ENCODE measurements at regions of chr7 and their contacts with region 1.

Region 1: DNA sequence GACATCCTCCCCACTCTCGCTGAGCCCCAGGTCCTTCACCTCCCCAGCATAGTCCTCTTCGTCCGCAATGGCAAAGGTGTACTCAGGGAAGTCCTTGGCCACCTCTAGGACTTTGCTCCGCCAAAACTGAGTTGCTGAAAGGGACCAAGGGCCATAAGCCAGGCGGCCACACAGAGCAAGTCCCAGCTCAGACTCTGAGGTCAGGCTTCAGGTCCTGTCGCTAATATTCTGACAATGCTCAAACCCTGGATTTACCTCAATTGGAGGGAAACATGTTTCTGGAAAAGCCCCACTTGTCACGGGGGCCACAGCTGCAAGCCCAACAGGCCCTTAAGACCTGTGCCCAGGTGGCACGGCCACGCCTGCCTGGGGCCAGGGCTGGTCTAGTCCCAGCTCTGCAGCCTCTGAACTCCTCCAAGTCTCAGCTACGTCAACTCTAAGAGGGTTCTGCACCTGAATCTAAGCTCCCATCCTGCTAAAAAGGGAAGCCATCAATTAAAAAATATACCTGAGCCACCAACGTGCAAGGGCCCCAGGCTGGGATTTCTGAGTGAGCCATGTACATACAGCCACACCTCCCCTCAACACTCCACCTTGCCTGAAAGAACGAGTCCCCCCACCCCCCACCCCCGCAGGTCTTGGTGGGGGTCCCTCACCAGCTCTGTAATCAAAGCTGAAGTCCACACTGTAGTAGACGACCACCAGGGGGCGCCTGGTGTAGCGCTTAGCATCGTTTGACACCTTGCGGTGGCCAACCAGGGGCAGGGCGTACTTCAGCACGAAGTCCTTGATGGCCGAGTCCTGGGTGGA is 22.9 kb downstream of the PDIA4 start:
- DNase-seq: peak; percentile 89
- ATAC-seq: peak; percentile 88
- H3K4me3 Mint-ChIP-seq: no peak overlapping the region
- H3K27ac Mint-ChIP-seq: no peak overlapping the region; the same call in 1 of the 2 replicates
- H3K4me1 Mint-ChIP-seq: no peaks in the 10 kb centered on the region
- H3K27me3 Mint-ChIP-seq: no peaks in the 10 kb centered on the region
- CTCF ChIP-seq: peak; percentile 93

Region 2: GRCh38 chr7:148987010-148987750 is 18.3 kb before region 1 on chr7:
- CTCF ChIA-PET with region 1: interaction called, 11 read pairs
- POLR2A ChIA-PET with region 1: no interaction called
- DNase-seq: peak; percentile 84
- ATAC-seq: peak; percentile 94
- H3K4me3 Mint-ChIP-seq: peak overlapping the region; percentile 96
- H3K27ac Mint-ChIP-seq: peak overlapping the region; percentile 99
- H3K4me1 Mint-ChIP-seq: peaks cover 39% of the 10 kb centered on the region
- H3K27me3 Mint-ChIP-seq: peaks cover 11% of the 10 kb centered on the region
- CTCF ChIP-seq: no peak

Region 3: GRCh38 chr7:149021725-149022062 is 16.2 kb after region 1 on chr7:
- CTCF ChIA-PET with region 1: interaction called, 32 read pairs
- POLR2A ChIA-PET with region 1: no interaction called
- DNase-seq: no peak
- ATAC-seq: peak; percentile 32
- H3K4me3 Mint-ChIP-seq: no peak overlapping the region
- H3K27ac Mint-ChIP-seq: peak overlapping the region; percentile 48
- H3K4me1 Mint-ChIP-seq: peaks cover 43% of the 10 kb centered on the region
- H3K27me3 Mint-ChIP-seq: no peaks in the 10 kb centered on the region
- CTCF ChIP-seq: no peak

Region 4: DNA sequence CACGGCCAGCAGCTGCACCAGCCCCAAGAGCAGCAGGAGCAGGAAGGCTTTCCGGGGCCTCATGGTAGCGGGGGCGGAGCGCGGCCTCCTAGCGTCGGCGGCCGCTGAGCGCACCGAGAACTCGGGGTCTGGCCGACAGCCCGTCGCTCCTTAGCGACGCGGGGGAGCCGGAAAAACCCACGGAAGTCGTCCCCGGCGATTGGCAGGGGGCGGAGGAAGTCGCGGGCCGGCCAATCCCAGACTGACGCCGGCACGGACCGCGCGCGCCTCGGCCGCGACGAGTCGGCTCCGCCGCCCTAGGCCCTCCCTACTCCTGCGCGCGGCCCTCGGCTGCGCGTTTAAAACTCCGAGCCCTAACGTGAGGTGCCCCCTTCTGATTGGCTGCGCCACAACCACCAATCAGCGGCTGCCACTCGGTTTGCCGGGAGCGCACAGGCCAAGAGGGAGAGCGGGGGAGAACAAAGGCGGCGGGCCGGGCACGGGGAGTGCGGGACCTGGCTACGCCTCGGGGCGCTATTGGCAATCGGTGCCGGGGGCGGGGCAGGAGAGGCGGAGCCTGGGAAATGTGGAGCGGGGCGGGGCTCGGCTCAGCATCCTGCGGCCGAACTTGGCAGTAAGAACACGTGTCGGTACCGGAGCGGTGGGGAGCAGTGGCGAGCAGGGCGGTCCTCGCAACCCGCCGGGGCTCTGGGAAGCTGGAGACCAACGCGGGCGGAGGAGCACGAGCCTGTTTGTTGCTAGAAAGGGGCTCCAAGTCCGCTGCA is 23.1 kb after region 1 on chr7 and contains the start of gene PDIA4:
- CTCF ChIA-PET with region 1: interaction called, 32 read pairs
- POLR2A ChIA-PET with region 1: no interaction called
- DNase-seq: peak; percentile 100
- ATAC-seq: peak; percentile 95
- H3K4me3 Mint-ChIP-seq: peak within 1 kb of the TSS; percentile 96
- H3K27ac Mint-ChIP-seq: peak within 1 kb of the TSS; percentile 91
- H3K4me1 Mint-ChIP-seq: peaks cover 42% of the 10 kb centered on the region
- H3K27me3 Mint-ChIP-seq: peaks cover 7% of the 10 kb centered on the region; the same call in 1 of the 2 replicates
- CTCF ChIP-seq: no peak
- total RNA-seq, gene PDIA4: 286 to 341 TPM (median 289 TPM) in 3 replicates

Region 5: DNA sequence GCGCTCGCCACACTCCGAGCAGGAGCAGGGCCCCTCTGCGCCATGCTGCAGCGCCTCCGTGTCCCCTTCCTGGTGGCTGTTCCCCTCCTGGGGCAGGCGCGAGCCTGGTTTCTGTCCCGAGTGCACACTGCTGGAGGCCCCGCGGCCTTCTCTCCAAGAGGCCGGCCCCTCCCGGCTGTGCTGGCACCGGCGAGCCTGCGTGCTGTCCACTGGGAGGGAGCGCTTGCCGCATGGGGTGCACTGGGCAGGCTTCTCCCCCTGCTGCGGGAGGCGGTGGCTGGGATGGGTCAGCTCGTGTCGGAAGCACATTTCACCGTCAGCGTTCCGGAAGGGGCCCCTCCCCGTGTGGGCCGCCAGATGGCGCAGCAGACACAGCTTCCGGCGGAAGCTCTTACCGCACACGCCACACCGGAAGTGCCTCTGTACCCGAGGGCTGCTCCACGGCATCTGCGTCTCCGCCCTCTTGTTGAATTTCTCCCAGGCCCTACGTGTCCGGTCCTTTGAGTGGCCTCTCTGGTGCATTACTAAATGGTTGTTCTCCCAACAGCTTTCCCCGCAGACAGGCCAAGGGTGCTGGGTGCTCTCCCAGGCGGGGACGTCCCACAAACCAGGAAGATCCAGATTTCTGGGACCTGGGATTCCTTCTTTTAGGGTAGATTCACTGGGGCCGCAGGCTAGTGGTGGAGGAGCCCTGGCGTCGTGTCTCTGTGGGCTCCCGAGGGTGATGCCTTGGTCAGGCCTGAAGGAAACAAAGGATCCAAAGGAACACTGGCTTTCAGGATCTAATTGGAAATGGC is 66.4 kb after region 1 on chr7:
- CTCF ChIA-PET with region 1: interaction called, 60 read pairs
- POLR2A ChIA-PET with region 1: no interaction called
- DNase-seq: peak; percentile 88
- ATAC-seq: peak; percentile 94
- H3K4me3 Mint-ChIP-seq: no peak overlapping the region
- H3K27ac Mint-ChIP-seq: peak overlapping the region; percentile 34; the same call in 1 of the 2 replicates
- H3K4me1 Mint-ChIP-seq: peaks cover 7% of the 10 kb centered on the region; the same call in 1 of the 2 replicates
- H3K27me3 Mint-ChIP-seq: no peaks in the 10 kb centered on the region
- CTCF ChIP-seq: peak; percentile 71

Region 6: DNA sequence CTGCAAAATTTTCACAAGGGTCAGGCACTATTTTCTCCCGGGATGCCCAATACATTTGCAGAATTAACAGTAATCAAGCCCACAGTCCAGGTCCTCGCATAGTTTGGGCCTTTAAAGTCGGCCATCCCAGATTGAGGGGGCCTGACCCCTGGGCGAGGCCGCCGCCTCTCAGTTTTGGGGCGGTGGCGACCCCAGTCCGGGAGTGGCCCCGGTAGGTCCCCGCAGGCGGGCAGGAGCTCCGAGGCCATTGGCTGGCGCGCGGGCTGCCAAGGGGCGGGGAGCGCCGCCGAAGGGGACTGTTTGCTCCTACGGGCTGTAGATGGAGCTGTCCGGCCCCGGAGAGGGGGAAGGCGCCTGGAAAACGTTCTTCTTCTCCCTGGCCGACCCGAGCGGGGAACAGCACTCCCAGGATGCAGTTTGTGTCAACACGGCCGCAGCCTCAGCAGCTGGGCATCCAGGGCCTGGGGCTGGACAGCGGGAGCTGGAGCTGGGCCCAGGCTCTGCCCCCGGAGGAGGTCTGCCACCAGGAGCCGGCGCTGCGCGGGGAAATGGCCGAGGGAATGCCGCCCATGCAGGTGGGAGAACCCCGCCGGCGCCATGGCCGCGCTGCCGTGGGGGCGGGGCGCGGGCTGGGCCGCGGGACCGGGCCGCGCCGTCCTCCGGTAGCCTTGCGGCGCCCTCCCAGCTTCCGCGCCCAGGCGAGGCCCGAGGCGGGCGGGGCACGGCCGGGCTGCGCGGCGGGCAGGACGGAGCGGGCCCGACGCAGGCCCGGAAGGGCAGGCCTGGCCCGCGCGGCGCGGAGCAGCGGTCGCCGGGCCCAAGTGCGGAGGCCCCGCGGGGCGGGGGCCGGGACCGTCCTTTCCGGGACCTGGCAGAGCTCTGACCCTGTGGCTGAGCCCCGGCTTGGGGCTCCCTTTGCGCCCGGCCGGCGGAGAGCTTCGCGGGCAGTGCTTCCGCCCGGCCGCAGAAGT is 190.0 kb after region 1 on chr7 and contains the start of gene ZNF282:
- CTCF ChIA-PET with region 1: interaction called, 12 read pairs
- POLR2A ChIA-PET with region 1: no interaction called
- DNase-seq: peak; percentile 95
- ATAC-seq: peak; percentile 96
- H3K4me3 Mint-ChIP-seq: peak within 1 kb of the TSS; percentile 88
- H3K27ac Mint-ChIP-seq: peak within 1 kb of the TSS; percentile 87
- H3K4me1 Mint-ChIP-seq: peaks cover 13% of the 10 kb centered on the region
- H3K27me3 Mint-ChIP-seq: no peaks in the 10 kb centered on the region
- CTCF ChIP-seq: no peak
- total RNA-seq, gene ZNF282: 34.8 to 39.3 TPM (median 38.5 TPM) in 3 replicates

Measured in WTC11 (cell line).